Caco-2 (cell line): ENCODE measurements at regions of chr3 and their contacts with region 1.

Region 1: DNA sequence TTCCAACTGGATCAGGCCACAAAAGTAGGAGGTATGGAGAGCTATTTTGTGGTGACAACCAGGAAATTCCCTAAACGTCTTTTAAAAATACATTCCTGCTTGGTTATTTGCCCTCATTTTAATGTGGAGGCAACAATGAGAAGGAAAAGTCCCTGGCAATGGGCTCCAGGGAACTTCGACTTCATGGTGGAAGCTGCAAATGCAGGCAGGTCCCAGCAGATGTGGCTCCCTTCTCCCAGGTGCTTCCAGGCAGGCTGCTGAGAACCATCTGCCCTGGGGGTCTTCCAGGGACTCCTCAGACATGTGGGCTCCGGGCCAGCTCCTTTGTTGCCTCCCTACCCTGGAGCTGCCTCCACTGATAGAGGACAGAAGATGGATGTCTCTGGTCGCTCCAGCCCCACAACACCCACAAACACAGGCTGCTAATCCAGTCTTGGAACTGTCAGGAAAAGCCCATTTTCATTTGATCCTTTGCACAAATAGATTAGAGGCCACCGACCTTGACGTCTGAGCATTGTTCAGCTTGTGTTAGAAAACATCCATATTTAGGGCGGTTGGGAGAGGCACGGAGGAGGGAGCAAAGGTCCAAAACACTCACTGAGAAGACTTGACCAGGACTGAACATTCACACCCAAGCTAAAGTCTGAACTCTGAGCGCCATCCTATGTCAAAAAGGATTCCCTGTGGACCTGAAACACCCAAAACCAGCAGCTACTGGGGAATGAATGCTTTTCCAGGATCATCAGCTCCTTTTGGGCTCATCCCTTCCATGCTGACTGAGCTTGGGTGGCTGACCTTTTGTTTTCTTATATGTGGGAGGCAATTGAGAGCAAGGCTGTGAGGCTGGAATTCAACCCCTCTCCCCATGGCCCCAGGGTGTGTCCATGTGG is 30.2 kb upstream of the SLCO2A1 start:
- DNase-seq: peak; percentile 30 to 44
- H3K4me3 ChIP-seq: no peak overlapping the region
- H3K4me3 Mint-ChIP-seq: no peak overlapping the region
- H3K27ac Mint-ChIP-seq: no peak overlapping the region
- H3K4me1 ChIP-seq: peaks cover 48% of the 10 kb centered on the region
- H3K4me1 Mint-ChIP-seq: peaks cover 29% of the 10 kb centered on the region
- H3K27me3 ChIP-seq: no peaks in the 10 kb centered on the region
- H3K27me3 Mint-ChIP-seq: no peaks in the 10 kb centered on the region
- CTCF ChIP-seq: peak in 1 of 2 experiments; percentile 33

Region 2: GRCh38 chr3:133734305-133734704 is 325.6 kb before region 1 on chr3:
- CTCF ChIA-PET with region 1: no interaction called
- POLR2A ChIA-PET with region 1: no interaction called
- intact Hi-C with region 1: no loop called
- DNase-seq: no peak
- H3K4me3 ChIP-seq: no peak overlapping the region
- H3K4me3 Mint-ChIP-seq: no peak overlapping the region
- H3K27ac Mint-ChIP-seq: no peak overlapping the region
- H3K4me1 ChIP-seq: peaks cover 26% of the 10 kb centered on the region; the same call in 1 of the 2 replicates
- H3K4me1 Mint-ChIP-seq: peaks cover 5% of the 10 kb centered on the region
- H3K27me3 ChIP-seq: no peaks in the 10 kb centered on the region
- H3K27me3 Mint-ChIP-seq: no peaks in the 10 kb centered on the region
- CTCF ChIP-seq: no peak

Region 3: GRCh38 chr3:133821767-133822638 is 237.9 kb before region 1 on chr3:
- CTCF ChIA-PET with region 1: interaction called, 3 read pairs
- POLR2A ChIA-PET with region 1: no interaction called
- intact Hi-C with region 1: loop called (anchors 2 kb)
- DNase-seq: peak in 1 of 2 experiments; percentile 43
- H3K4me3 ChIP-seq: no peak overlapping the region
- H3K4me3 Mint-ChIP-seq: no peak overlapping the region
- H3K27ac Mint-ChIP-seq: no peak overlapping the region
- H3K4me1 ChIP-seq: no peaks in the 10 kb centered on the region
- H3K4me1 Mint-ChIP-seq: no peaks in the 10 kb centered on the region
- H3K27me3 ChIP-seq: no peaks in the 10 kb centered on the region
- H3K27me3 Mint-ChIP-seq: no peaks in the 10 kb centered on the region
- CTCF ChIP-seq: no peak

Region 4: DNA sequence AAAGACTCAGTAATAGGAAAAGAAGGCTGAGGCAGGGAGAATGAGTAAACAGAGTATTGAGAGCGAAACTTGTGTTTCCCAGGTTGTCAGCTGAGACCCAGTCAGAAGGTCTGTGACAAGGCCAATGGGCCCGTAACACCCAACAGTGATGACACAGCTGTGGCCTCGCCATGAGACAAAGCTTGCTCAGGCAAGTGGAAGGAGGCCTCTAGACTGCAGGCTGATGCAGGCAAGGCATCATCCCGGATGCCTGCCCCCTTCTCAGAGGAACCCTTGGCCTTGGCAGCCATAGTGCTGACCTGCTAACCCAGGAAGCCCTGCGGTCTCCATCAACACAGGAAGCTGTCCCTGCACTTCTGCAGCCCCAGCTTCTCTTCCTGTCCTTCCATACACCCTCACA is 179.6 kb before region 1 on chr3:
- CTCF ChIA-PET with region 1: no interaction called
- POLR2A ChIA-PET with region 1: no interaction called
- intact Hi-C with region 1: no loop called
- DNase-seq: no peak
- H3K4me3 ChIP-seq: no peak overlapping the region
- H3K4me3 Mint-ChIP-seq: no peak overlapping the region
- H3K27ac Mint-ChIP-seq: no peak overlapping the region
- H3K4me1 ChIP-seq: 0 out of 2 replicates have a peak, but pooled peaks cover 7% of the 10 kb centered on the region
- H3K4me1 Mint-ChIP-seq: no peaks in the 10 kb centered on the region
- H3K27me3 ChIP-seq: no peaks in the 10 kb centered on the region
- H3K27me3 Mint-ChIP-seq: no peaks in the 10 kb centered on the region
- CTCF ChIP-seq: no peak

Region 5: GRCh38 chr3:133991637-133992036 is 68.3 kb before region 1 on chr3:
- CTCF ChIA-PET with region 1: interaction called, 4 read pairs
- POLR2A ChIA-PET with region 1: no interaction called
- intact Hi-C with region 1: loop called (anchors 1 kb)
- DNase-seq: no peak
- H3K4me3 ChIP-seq: no peak overlapping the region
- H3K4me3 Mint-ChIP-seq: no peak overlapping the region
- H3K27ac Mint-ChIP-seq: no peak overlapping the region
- H3K4me1 ChIP-seq: peaks cover 43% of the 10 kb centered on the region
- H3K4me1 Mint-ChIP-seq: peaks cover 40% of the 10 kb centered on the region
- H3K27me3 ChIP-seq: no peaks in the 10 kb centered on the region
- H3K27me3 Mint-ChIP-seq: no peaks in the 10 kb centered on the region
- CTCF ChIP-seq: no peak

Region 6: GRCh38 chr3:134018406-134018805 is 41.5 kb before region 1 on chr3:
- CTCF ChIA-PET with region 1: no interaction called
- POLR2A ChIA-PET with region 1: no interaction called
- intact Hi-C with region 1: no loop called
- DNase-seq: no peak
- H3K4me3 ChIP-seq: no peak overlapping the region
- H3K4me3 Mint-ChIP-seq: no peak overlapping the region
- H3K27ac Mint-ChIP-seq: no peak overlapping the region
- H3K4me1 ChIP-seq: no peaks in the 10 kb centered on the region
- H3K4me1 Mint-ChIP-seq: peaks cover 7% of the 10 kb centered on the region
- H3K27me3 ChIP-seq: no peaks in the 10 kb centered on the region
- H3K27me3 Mint-ChIP-seq: no peaks in the 10 kb centered on the region
- CTCF ChIP-seq: no peak

Region 7: DNA sequence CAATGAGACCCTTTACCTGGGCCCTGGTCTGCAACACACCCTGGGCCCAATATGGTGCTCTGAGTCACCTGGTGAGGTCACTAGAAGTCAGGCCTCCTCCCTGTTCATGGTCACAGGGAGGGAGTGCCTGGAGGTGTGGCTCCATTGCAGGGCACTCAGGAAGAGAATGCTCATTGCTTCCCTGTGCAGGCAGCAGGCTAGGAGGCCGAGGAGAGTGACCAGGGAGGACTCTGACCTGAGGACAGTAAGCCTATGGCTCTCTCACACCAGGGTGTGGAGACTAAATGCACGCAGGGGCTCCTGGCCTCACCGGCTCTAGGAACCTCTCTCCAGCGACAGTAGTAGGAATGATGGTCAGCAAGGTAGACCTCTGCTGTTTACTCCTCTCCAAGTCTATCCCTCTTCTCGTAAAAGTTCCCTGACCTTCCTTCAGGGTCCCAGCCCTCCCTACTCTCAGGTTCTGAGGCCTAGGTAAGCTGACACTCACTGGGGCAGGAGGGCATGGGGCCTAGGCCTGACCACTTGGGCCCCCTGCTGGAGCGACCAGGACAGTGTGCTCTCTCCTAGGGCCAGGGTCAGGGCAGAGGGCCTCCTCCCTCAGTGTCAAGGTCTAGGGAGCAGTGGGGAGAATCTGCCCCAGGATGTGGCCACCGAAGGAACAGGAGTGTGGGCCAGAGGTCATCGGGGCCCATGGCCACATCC is 20.6 kb before region 1 on chr3:
- CTCF ChIA-PET with region 1: no interaction called
- POLR2A ChIA-PET with region 1: no interaction called
- intact Hi-C with region 1: loop called (anchors 1 kb)
- DNase-seq: peak; percentile 54 to 79
- H3K4me3 ChIP-seq: no peak overlapping the region
- H3K4me3 Mint-ChIP-seq: no peak overlapping the region
- H3K27ac Mint-ChIP-seq: peak overlapping the region; percentile 51
- H3K4me1 ChIP-seq: peaks cover 16% of the 10 kb centered on the region
- H3K4me1 Mint-ChIP-seq: peaks cover 8% of the 10 kb centered on the region
- H3K27me3 ChIP-seq: no peaks in the 10 kb centered on the region
- H3K27me3 Mint-ChIP-seq: no peaks in the 10 kb centered on the region
- CTCF ChIP-seq: peak; percentile 19 to 35